ENCODE measurements at regions of chr10 and their contacts with region 1.

Region 1: DNA sequence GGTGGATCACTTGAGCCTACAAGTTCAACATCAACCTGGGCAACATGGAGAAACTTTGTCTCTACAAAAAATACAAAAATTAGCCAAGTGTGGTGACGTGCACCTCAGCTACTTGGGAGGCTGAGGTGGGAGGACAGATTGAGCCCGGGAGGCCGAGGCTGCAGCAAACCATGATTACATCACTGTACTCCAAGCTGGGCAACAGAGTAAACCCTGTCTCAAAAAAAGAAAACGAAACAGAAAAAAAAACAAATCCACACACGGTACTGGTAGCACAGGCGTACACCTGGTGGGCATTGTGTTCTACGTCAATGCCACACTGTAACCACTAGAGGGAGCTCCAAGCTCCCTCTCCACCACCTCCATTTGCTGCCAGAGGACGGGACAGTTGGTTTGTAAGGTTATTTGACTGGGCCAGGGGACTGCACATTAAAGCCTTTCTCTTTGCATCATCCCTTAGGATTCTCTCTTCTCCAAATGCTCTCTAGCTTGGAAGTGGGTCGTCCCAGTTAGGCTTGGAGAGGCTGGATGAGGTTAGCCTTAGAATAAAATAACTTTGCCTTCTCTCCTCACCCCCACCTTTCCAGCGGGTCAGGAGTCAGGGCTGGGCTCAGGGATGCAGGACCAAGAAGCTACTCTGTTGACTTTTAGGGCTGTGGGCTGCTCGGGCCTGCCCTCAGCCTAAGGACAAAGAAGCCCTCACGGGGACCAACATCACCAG is 130.8 kb downstream of the SORBS1 start:
- DNase-seq: peak; percentile 55
- ATAC-seq: peak; percentile 93
- H3K4me3 Mint-ChIP-seq: no peak overlapping the region
- H3K27ac Mint-ChIP-seq: no peak overlapping the region
- H3K4me1 Mint-ChIP-seq: peaks cover 6% of the 10 kb centered on the region
- H3K27me3 Mint-ChIP-seq: peaks cover 17% of the 10 kb centered on the region

Region 2: GRCh38 chr10:95419399-95419798 is 11.0 kb before region 1 on chr10:
- CTCF ChIA-PET with region 1: interaction called, 10 read pairs
- DNase-seq: no peak
- ATAC-seq: no peak
- H3K4me3 Mint-ChIP-seq: no peak overlapping the region
- H3K27ac Mint-ChIP-seq: no peak overlapping the region
- H3K4me1 Mint-ChIP-seq: no peaks in the 10 kb centered on the region
- H3K27me3 Mint-ChIP-seq: peaks cover 6% of the 10 kb centered on the region

Region 3: DNA sequence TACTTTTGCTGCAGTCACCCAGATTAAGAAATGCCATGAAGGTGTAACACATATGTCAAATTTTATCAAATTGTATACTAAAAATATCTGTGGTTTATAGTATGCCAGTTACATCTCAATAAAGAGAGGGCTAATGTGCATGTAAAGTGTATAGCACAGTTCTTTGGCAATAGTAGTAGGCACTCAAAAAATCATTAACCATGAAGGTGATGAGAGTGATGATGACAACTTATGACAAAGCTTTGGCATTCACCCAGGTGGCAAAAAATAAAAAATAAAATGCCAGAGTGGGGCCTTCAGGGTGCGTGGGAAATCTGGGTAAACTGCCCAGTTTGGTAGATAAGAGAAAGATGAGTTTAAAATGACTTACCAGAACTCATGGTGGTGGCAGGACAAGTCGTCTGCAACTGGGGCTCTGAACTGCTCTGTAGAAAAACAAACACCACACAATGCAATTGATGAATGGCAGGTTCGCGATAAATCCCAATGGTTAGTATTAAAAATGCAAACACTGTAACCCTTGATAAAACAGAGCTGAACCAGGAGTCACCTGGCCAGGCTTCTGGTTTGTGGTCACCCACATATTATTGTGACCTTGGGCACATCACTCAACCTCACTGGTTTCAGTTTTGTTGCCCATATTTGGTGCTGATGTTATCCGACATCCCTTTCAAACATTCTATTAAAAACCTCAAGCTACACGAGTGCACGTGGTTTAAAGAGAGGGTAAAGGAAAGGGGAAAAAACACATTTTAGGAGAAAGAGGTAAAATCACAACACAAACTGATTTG is 10.6 kb after region 1 on chr10:
- CTCF ChIA-PET with region 1: interaction called, 55 read pairs
- DNase-seq: peak; percentile 77
- ATAC-seq: peak; percentile 77
- H3K4me3 Mint-ChIP-seq: no peak overlapping the region
- H3K27ac Mint-ChIP-seq: no peak overlapping the region
- H3K4me1 Mint-ChIP-seq: peaks cover 19% of the 10 kb centered on the region
- H3K27me3 Mint-ChIP-seq: peaks cover 45% of the 10 kb centered on the region

Region 4: GRCh38 chr10:95445837-95446486 is 15.6 kb after region 1 on chr10:
- CTCF ChIA-PET with region 1: interaction called, 55 read pairs
- DNase-seq: peak; percentile 61
- ATAC-seq: peak; percentile 53
- H3K4me3 Mint-ChIP-seq: no peak overlapping the region
- H3K27ac Mint-ChIP-seq: no peak overlapping the region
- H3K4me1 Mint-ChIP-seq: peaks cover 11% of the 10 kb centered on the region
- H3K27me3 Mint-ChIP-seq: peaks cover 37% of the 10 kb centered on the region

Region 5: DNA sequence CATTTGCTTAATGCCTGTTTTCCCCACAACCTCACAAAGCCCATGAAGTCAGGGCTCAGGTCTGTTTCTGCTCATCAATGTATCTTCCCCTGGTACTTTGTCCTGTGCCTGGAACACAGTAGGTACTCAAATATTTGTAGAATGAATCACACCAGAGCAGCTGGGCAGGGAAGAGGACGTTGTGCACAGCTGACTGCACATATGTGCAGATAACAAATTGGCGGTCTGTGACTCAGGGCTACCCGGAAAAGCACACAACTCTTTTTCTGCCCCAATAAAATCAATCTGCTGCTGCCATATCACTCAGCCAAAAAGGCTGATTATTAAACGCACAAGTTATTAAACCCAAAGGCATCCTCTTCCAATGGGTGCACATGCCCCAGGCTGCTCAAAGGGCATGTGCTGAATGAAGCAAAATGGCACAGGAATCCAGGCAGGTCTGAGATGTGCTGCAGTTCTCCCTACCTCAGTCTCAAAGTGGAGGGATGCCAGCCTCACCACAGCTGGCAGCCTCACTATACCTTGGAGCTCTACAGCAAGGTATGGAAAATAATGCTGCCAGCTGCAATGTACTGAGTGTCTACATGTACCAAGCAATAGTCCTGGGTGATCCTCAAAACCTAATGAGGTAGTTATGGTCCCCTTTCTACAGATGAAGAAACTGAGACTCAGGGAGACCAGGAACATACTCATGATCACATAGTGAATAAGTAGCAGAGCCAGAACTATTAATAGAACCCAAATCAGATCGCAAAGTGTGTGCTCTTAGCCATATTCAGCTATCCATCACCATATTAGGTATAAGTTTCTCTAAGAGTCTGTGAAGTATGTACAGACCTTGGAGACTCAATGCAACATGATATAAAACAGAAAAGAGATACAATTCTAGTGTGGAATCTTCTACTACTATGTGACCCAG is 87.4 kb after region 1 on chr10:
- CTCF ChIA-PET with region 1: no interaction called
- DNase-seq: no peak
- ATAC-seq: no peak
- H3K4me3 Mint-ChIP-seq: no peak overlapping the region
- H3K27ac Mint-ChIP-seq: no peak overlapping the region
- H3K4me1 Mint-ChIP-seq: peaks cover 10% of the 10 kb centered on the region
- H3K27me3 Mint-ChIP-seq: no peaks in the 10 kb centered on the region

Region 6: DNA sequence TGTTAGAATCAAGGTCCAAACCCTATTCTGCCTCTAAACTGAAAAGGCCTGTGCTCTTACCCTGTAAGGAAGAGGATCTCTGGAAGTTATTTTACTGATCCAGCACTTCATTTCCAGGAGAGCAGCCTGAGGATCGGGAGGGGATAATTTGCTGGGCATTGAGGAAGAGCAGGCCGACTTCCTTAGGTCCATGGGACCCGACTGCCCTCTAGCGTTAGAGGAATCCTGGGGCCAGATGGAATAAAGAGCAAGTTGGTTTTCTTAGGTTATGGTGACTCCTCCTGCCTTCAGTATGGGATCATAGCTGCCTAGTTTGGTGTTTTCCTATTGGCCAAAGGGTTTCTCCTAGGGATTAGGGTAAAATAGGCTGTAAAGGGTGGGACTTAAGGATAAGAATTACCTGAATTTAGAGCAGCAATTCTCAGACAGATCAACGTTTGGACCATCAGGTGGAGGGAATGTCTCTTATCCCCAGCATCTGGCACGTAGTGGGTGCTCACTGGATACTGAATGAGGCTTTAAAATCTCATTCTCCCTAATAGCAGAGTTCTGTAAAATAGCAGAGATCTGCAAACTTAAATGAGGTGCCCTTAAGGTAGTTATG is 170.8 kb after region 1 on chr10:
- CTCF ChIA-PET with region 1: interaction called, 85 read pairs
- DNase-seq: peak; percentile 59
- ATAC-seq: peak; percentile 51
- H3K4me3 Mint-ChIP-seq: no peak overlapping the region
- H3K27ac Mint-ChIP-seq: no peak overlapping the region
- H3K4me1 Mint-ChIP-seq: no peaks in the 10 kb centered on the region
- H3K27me3 Mint-ChIP-seq: peaks cover 12% of the 10 kb centered on the region

Measured in activated CD8-positive, alpha-beta memory T cell treated with anti-CD3 and anti-CD28 coated beads, Interleukin-2, amount 10 ng/mL, durations not matched to agents 7 days and 5 days (primary cell).